ENCODE measurements at regions of chr12 and their contacts with region 1.

Region 1: DNA sequence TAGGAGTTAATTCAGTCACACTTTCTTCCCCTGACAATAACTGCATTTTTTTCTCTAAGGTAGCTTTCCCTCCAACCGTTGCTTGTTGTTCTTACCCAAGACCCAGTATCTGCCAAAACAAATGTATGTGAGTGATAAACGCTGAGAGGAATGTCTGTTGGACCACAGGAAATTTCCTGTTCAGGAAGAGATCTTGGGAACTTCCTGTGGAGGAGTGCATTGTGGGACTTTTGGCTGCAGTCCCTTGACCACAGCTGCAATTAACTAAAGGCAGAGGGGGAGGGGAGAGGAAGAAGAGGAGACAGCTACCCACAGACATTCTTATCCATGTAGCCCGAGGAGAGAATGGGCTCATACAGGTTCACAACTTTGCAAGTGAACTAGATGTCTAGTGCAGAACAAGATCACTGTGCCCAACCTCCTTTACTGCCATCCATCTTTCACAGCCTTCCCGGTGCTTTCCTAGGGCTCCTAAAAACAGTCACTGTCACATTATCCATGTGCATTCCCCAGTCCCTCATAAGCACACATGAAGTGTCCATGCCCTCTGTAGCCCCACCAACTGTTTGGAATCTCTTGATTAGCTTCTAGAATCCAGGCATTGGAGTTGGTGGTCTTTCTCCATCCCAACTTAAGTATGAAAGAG is 149.5 kb downstream of the ETV6 start:
- DNase-seq: no peak

Region 2: DNA sequence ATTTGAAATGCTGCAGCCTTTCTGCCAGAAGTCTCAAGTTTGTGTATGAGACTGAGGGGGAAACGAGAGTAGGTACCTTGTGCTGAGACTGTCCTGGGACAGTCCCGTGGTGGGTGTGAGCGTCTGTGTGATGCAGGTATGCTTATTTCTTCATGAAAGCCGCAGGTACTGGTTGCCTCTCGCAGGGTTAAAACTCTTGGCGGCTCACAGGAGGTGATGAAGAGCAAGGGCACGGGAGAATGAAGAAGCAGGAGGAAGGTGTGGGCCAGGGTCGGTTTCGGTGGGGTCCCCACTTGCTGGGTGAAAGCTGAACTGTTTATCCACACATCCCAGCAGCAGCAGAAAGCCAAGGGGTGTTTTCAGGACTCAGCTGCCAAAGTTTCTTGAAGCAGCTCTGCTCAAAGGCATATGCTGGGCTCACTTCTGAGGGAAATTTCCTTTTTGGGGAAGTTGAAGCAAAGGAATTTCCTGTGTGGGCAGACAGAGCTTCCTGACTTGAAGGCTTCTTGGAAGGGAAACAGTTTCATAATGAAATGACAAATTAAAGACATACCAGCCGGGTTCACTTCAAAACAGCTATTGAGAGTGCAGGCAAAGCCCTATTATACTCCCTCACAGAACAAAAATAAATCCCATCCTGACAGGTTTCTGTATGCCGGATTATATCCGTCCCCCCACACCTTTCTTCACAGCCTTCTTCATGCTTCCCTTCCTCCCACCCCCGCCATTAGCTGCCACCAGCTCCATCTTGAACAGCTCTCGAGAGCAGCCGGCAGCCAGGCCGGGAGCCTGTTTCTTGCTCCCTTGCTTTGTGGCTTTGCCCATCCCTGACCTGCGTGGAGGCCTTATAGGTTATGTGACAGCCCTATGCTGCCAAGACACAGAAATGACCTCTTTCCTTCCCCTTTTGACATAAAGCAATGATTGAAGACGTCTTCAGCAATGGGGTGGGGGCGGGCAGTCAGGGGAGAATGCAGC is 32.9 kb before region 1 on chr12:
- intact Hi-C with region 1: no loop called
- DNase-seq: peak; percentile 81

Region 3: DNA sequence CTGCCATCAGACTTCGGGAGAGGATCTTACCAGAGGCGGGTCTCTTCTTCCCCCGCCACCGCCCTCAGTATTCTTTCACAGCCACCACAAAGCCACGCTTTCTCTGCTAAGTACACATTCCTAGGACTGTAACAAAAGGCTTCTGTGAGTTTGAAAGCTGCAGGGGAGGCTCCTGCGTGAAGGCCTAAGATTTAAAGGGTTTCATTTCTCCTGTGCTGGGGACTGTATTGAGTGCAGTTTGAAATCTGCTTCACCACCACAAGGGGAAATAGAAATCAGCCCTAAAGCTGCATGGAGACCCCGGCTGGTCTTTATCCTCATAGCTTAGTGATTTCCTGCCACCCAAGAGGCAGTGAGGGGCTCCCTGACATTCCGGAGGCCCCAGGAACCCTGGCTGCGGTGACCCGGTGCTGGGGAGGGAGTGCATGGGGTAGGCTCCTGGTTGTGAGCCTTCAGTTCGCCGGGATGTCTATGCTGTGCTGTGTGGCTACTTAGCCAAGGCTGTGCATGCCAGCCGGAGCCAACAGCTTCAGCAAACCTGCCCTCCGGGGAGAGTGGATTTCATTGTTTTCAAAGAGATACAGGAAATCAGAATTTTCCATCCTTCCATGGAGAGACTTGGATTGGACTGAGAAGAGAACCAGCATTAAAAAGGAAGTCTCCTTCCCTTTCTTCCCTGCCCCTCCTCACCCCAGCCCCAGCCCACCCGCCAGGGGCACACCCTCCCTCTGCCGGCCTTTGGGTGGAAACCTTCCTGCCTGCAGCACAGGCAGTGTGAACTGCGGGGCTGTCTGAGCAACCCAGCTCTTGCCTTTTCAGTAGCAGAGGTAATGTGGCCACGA is 13.8 kb after region 1 on chr12:
- intact Hi-C with region 1: no loop called
- DNase-seq: no peak

Region 4: DNA sequence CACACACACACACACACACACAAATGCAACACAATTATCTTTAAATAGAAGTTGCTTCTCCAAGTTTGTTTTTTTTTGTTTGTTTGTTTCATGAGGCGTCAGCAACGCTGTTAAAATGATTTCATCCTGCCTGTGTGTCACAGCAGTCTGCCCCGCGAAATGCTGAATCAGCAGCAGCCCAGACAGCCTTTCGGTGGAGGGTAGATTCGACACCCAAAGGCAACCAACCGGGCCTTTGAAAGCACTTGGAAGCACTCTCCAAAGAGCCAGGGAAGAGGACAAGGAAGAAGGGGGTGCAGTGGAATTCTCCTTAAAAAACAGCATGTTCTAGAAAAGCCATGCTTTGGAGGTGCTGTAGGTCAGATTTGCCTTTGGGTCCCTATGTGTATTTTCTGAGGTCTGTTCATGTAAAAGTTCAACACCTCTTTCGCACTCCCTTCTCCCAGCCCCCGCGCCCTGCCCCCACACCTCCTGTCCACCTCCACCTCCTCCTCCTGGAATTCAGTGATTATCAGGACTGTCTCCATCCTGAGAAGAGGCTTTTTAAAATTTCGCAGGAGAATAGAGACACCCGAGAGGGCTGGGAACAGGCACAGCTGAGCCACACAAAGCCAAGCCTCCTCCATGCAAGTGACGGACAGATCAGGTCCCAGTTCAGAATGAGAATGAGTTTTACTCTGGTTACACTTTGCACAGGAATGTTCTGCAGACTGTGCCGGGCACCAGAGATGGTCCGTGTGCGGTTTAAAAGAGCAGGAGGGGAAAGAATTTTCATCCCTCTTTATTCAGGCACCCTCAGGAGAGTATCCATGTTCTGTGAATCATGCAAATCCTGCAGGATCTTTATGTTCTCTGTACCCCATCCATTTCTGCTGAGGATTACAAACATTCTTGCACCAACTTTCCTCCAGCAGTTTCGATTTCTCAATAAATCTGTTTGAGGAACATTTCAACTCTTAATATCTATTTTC is 28.4 kb after region 1 on chr12:
- intact Hi-C with region 1: loop called in 1 of 2 experiments (anchors 1 kb)
- DNase-seq: no peak

Measured in posterior vena cava (tissue), 2 donors.